IMR-90 (cell line): ENCODE measurements at regions of chr17 and their contacts with region 1.

Region 1: DNA sequence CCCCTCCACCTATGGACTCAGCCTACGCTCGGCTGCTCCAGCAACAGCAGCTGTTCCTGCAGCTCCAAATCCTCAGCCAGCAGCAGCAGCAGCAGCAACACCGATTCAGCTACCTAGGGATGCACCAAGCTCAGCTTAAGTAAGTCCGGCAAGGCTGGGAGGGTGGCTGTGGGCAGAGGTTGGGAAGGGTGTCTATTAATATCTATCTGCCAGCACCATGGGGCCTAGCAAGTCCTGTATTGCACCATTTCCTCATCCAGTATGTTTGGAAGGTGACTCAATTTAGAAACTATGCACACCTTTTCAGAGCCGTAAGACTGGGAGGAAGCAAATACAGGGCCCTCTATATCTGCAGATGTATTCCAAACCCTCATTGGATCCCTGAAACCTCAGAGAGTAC is 45.0 kb upstream of the ARHGAP44 start:
- DNase-seq: peak; percentile 69
- ATAC-seq: peak; percentile 25
- H3K4me3 ChIP-seq: no peak overlapping the region
- H3K27ac ChIP-seq: no peak overlapping the region
- H3K4me1 ChIP-seq: peaks cover 11% of the 10 kb centered on the region
- H3K27me3 ChIP-seq: no peaks in the 10 kb centered on the region
- CTCF ChIP-seq: no peak
- POLR2A ChIP-seq: no peak
- RAD21 ChIP-seq: no peak

Region 2: GRCh38 chr17:12180644-12181261 is 563.5 kb before region 1 on chr17:
- CTCF ChIA-PET with region 1: interaction called, 3 read pairs
- POLR2A ChIA-PET with region 1: no interaction called
- dilution Hi-C with region 1: no loop called
- in situ Hi-C with region 1: loop called (anchors 5 kb)
- intact Hi-C with region 1: loop called (anchors 1 kb)
- DNase-seq: peak; percentile 79
- ATAC-seq: peak; percentile 96
- H3K4me3 ChIP-seq: no peak overlapping the region
- H3K27ac ChIP-seq: no peak overlapping the region
- H3K4me1 ChIP-seq: no peaks in the 10 kb centered on the region
- H3K27me3 ChIP-seq: no peaks in the 10 kb centered on the region
- CTCF ChIP-seq: peak; percentile 90
- POLR2A ChIP-seq: 0 out of 2 replicates have a peak, but pooled peaks have one; percentile 30
- RAD21 ChIP-seq: peak; percentile 91

Region 3: GRCh38 chr17:12242345-12242954 is 501.8 kb before region 1 on chr17:
- CTCF ChIA-PET with region 1: no interaction called
- POLR2A ChIA-PET with region 1: no interaction called
- dilution Hi-C with region 1: no loop called
- in situ Hi-C with region 1: no loop called
- intact Hi-C with region 1: loop called (anchors 5 kb)
- DNase-seq: peak; percentile 48
- ATAC-seq: peak; percentile 73
- H3K4me3 ChIP-seq: no peak overlapping the region
- H3K27ac ChIP-seq: no peak overlapping the region
- H3K4me1 ChIP-seq: peaks cover 3% of the 10 kb centered on the region
- H3K27me3 ChIP-seq: no peaks in the 10 kb centered on the region
- CTCF ChIP-seq: no peak
- POLR2A ChIP-seq: no peak
- RAD21 ChIP-seq: no peak

Region 4: DNA sequence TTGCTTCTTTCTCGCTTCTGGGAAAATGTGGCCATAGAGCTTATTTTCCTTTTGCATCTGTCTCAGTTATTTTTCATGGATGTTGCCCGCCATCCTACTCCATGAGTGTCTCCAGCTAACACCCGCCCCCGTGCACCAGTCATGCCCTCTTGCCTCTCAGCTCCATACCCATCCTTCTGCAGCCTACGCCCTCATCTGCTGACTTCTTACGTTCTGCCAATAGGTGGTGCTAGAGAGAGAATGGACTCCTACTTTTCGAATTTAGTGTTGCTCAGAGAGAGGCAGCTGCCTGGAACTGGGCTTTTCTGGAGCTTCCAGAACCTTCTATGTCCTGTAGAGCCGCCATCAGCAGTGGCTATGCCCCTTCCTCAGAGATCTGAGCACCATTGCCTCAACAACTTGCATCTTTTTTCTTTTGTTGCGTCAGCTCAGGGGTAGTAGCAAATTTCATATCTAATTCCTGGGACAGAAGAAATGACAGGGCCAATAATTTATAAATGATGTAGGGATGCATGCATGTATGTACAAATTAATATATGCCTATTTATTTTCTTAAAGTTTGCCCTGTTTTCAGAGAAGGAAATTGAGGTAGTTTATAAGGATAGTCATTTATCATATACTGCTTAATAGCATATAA is 198.3 kb before region 1 on chr17:
- CTCF ChIA-PET with region 1: interaction called, 17 read pairs
- POLR2A ChIA-PET with region 1: no interaction called
- dilution Hi-C with region 1: no loop called
- in situ Hi-C with region 1: no loop called
- intact Hi-C with region 1: loop called (anchors 1 kb)
- DNase-seq: peak; percentile 63
- ATAC-seq: peak; percentile 88
- H3K4me3 ChIP-seq: no peak overlapping the region
- H3K27ac ChIP-seq: no peak overlapping the region
- H3K4me1 ChIP-seq: peaks cover 4% of the 10 kb centered on the region; the same call in 1 of the 2 replicates
- H3K27me3 ChIP-seq: no peaks in the 10 kb centered on the region
- CTCF ChIP-seq: peak; percentile 70
- POLR2A ChIP-seq: no peak
- RAD21 ChIP-seq: peak; percentile 75

Region 5: GRCh38 chr17:12730931-12731521 is 13.3 kb before region 1 on chr17:
- CTCF ChIA-PET with region 1: interaction called, 16 read pairs
- POLR2A ChIA-PET with region 1: no interaction called
- dilution Hi-C with region 1: no loop called
- in situ Hi-C with region 1: no loop called
- intact Hi-C with region 1: no loop called
- DNase-seq: peak; percentile 78
- ATAC-seq: peak; percentile 79
- H3K4me3 ChIP-seq: no peak overlapping the region
- H3K27ac ChIP-seq: peak overlapping the region; percentile 33; the same call in 1 of the 2 replicates
- H3K4me1 ChIP-seq: peaks cover 22% of the 10 kb centered on the region
- H3K27me3 ChIP-seq: no peaks in the 10 kb centered on the region
- CTCF ChIP-seq: no peak
- POLR2A ChIP-seq: no peak
- RAD21 ChIP-seq: no peak

Region 6: DNA sequence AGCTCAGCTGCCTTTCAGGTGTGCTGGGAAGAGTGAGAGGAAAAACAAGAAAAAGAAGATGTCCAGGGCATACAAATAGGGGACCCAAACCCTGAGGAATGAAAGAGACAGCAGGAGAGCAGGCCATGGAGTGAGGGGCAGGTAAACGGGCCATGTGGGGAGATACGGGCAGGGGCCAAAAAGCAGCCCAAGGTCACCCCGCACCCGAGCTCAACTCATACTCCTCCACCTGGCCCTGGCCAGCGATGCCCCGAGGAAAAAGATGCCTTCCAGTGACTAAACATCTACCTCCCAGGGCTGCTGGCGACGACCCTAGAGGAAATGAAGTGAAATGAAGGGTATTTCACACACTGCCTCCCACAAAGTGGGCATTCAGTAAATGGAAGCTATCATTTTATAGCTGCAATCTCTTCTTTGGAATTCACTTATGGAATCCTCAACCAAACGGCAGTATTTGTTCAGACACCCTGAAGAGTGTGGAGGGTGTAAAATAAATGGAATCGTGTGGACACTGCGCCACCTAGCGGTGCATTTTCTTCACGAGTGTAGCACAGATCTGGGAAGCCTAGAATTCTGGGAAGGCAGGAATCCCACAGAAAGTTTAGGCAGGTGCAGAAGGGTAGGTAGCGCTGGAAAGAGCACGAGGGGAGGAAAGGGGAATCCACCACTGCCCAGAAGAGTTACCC is 258.6 kb after region 1 on chr17:
- CTCF ChIA-PET with region 1: interaction called, 3 read pairs
- POLR2A ChIA-PET with region 1: no interaction called
- dilution Hi-C with region 1: no loop called
- in situ Hi-C with region 1: no loop called
- intact Hi-C with region 1: loop called (anchors 2 kb)
- DNase-seq: peak; percentile 77
- ATAC-seq: peak; percentile 95
- H3K4me3 ChIP-seq: no peak overlapping the region
- H3K27ac ChIP-seq: no peak overlapping the region
- H3K4me1 ChIP-seq: no peaks in the 10 kb centered on the region
- H3K27me3 ChIP-seq: no peaks in the 10 kb centered on the region
- CTCF ChIP-seq: peak; percentile 83
- POLR2A ChIP-seq: no peak
- RAD21 ChIP-seq: peak; percentile 88